WTC11 (cell line): ENCODE measurements at regions of chr7 and their contacts with region 1.

Region 1: DNA sequence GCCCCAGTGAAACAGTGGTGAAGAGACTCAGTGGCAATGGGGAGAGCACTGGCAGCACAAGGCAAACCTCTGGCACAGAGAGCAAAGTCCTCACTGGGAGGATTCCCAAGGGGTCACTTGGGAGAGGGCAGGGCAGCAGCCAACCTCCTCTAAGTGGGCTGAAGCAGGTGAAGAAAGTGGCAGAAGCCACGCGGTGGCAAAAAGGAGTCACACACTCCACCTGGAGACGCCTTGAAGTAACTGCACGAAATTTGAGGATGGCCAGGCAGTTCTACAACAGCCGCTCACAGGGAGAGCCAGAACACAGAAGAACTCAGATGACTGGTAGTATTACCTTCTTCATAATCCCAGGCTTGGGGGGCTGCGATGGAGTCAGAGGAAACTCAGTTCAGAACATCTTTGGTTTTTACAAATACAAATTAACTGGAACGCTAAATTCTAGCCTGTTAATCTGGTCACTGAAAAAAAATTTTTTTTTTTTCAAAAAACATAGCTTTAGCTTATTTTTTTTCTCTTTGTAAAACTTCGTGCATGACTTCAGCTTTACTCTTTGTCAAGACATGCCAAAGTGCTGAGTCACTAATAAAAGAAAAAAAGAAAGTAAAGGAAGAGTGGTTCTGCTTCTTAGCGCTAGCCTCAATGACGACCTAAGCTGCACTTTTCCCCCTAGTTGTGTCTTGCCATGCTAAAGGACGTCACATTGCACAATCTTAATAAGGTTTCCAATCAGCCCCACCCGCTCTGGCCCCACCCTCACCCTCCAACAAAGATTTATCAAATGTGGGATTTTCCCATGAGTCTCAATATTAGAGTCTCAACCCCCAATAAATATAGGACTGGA is 435 bp upstream of the IL6 start:
- DNase-seq: peak; percentile 58
- ATAC-seq: peak; percentile 85
- H3K4me3 Mint-ChIP-seq: peak overlapping the region; percentile 22; the same call in 1 of the 2 replicates
- H3K27ac Mint-ChIP-seq: peak overlapping the region; percentile 31; the same call in 1 of the 2 replicates
- H3K4me1 Mint-ChIP-seq: peaks cover 42% of the 10 kb centered on the region
- H3K27me3 Mint-ChIP-seq: peaks cover 4% of the 10 kb centered on the region
- CTCF ChIP-seq: peak; percentile 39; the same call in 1 of the 2 replicates

Region 2: GRCh38 chr7:22586786-22587140 is 139.8 kb before region 1 on chr7:
- CTCF ChIA-PET with region 1: interaction called, 26 read pairs
- POLR2A ChIA-PET with region 1: no interaction called
- DNase-seq: no peak
- ATAC-seq: peak; percentile 72
- H3K4me3 Mint-ChIP-seq: no peak overlapping the region
- H3K27ac Mint-ChIP-seq: peak overlapping the region; percentile 33; the same call in 1 of the 2 replicates
- H3K4me1 Mint-ChIP-seq: peaks cover 58% of the 10 kb centered on the region
- H3K27me3 Mint-ChIP-seq: no peaks in the 10 kb centered on the region
- CTCF ChIP-seq: no peak

Region 3: DNA sequence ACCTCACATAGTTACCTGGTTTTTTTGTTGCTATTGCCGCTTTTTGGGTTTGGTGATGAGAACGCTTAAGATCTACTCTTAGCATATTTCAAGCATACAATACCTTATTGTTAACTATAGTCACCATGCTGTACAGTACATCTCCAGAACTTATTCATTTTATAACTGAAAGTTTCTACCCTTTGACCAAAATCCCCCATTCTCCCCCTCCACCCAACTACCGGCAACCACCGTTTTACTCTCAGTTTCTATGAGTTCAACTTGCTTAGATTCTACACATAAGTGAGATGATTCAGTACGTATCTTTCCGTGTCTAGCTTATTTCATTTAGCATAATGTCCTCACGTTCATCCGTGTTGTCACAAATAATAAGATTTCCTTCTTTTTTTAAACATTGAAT is 86.3 kb before region 1 on chr7:
- CTCF ChIA-PET with region 1: no interaction called
- POLR2A ChIA-PET with region 1: no interaction called
- DNase-seq: no peak
- ATAC-seq: no peak
- H3K4me3 Mint-ChIP-seq: no peak overlapping the region
- H3K27ac Mint-ChIP-seq: no peak overlapping the region
- H3K4me1 Mint-ChIP-seq: no peaks in the 10 kb centered on the region
- H3K27me3 Mint-ChIP-seq: no peaks in the 10 kb centered on the region; the same call in 1 of the 2 replicates
- CTCF ChIP-seq: no peak

Region 4: DNA sequence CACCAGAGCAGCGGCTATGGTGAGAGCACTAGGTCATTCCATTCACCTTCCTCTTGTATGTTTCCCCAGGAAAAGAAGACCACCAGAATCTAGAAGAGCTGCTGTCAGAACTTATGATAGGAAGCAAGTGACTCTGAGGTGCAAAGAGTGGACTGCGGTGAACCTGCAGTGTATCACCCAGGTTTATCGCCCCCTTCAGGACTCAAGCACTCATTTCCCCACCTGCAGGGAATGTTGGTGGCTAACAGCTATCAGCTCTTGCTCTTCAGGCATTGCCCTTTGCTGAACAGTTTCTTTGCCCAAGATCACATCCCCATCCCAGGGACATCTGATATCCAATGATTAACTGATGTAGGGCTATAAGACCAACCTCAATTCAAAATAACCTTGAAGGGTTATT is 65.8 kb before region 1 on chr7:
- CTCF ChIA-PET with region 1: interaction called, 20 read pairs
- POLR2A ChIA-PET with region 1: no interaction called
- DNase-seq: peak; percentile 32
- ATAC-seq: peak; percentile 86
- H3K4me3 Mint-ChIP-seq: no peak overlapping the region
- H3K27ac Mint-ChIP-seq: no peak overlapping the region
- H3K4me1 Mint-ChIP-seq: peaks cover 25% of the 10 kb centered on the region
- H3K27me3 Mint-ChIP-seq: no peaks in the 10 kb centered on the region
- CTCF ChIP-seq: peak; percentile 54; the same call in 1 of the 2 replicates

Region 5: GRCh38 chr7:22667562-22668239 is 58.9 kb before region 1 on chr7:
- CTCF ChIA-PET with region 1: interaction called, 20 read pairs
- POLR2A ChIA-PET with region 1: no interaction called
- DNase-seq: peak; percentile 19
- ATAC-seq: peak; percentile 86
- H3K4me3 Mint-ChIP-seq: peak overlapping the region; percentile 27
- H3K27ac Mint-ChIP-seq: peak overlapping the region; percentile 94
- H3K4me1 Mint-ChIP-seq: peaks cover 75% of the 10 kb centered on the region
- H3K27me3 Mint-ChIP-seq: no peaks in the 10 kb centered on the region; the same call in 1 of the 2 replicates
- CTCF ChIP-seq: no peak